Natural killer cell (primary cell): ENCODE measurements at regions of chr13 and their contacts with region 1.

Region 1: DNA sequence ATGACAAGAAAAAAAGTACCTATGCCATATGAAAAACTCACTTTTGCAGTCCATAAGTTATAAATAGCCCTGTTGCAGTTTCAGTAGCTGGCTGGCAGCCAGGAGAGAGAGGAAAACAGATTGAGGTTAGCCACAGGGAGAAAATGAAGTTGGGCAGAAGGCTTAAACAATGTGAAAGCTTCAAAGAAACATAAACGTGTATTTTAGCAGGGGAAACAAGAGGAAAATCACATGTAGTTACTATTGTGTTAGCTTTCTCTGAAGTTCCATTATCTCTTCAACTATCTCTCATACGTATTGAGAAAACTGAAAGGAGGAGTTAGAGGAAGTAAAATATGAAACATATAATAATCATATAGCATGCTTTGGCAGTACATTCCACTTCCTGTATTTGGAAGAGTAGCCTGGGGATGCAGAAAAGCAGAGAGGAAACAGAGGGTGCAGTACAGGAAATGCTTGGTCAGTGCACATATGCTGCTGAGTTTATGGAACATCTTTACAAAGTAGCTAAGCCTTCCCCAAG is 1551.1 kb downstream of the EFNB2 start:
- DNase-seq: peak in 1 of 2 donors; percentile 60
- ATAC-seq: peak; percentile 55 to 79 (median 63)
- H3K4me3 ChIP-seq: no peak overlapping the region
- H3K4me3 Mint-ChIP-seq: peak overlapping the region; percentile 68
- H3K27ac ChIP-seq: peak overlapping the region; percentile 55
- H3K27ac Mint-ChIP-seq: peak overlapping the region; percentile 80 to 89
- H3K4me1 ChIP-seq: no peaks in the 10 kb centered on the region
- H3K4me1 Mint-ChIP-seq: peaks cover 21 to 28% of the 10 kb centered on the region in 2 donors
- H3K27me3 ChIP-seq: no peaks in the 10 kb centered on the region
- H3K27me3 Mint-ChIP-seq: no peaks in the 10 kb centered on the region
- CTCF ChIP-seq: no peak

Region 2: DNA sequence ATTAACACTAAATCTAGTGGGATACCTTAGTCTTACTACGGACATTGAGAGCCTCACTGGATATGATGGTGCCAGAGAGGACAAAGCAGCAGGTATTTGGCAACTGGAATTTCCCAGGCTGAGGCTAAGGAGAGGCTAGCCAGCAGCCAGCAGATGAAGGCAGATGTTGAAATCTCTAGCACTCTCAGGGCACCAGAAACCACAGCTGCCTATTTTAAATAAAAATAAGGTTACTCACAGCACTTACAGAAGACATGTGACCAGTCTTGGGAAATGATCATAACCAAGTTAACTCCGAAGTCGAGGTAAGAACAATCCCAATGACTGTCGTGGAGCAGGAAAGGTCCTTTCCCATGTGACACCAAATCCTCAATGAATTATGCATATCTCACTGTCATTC is 174.9 kb before region 1 on chr13:
- intact Hi-C with region 1: loop called (anchors 10 kb)
- DNase-seq: no peak
- ATAC-seq: no peak
- H3K4me3 ChIP-seq: no peak overlapping the region
- H3K4me3 Mint-ChIP-seq: no peak overlapping the region
- H3K27ac ChIP-seq: no peak overlapping the region
- H3K27ac Mint-ChIP-seq: no peak overlapping the region
- H3K4me1 ChIP-seq: peaks cover 3% of the 10 kb centered on the region
- H3K4me1 Mint-ChIP-seq: peaks cover 12 to 13% of the 10 kb centered on the region in 2 donors
- H3K27me3 ChIP-seq: no peaks in the 10 kb centered on the region
- H3K27me3 Mint-ChIP-seq: peaks cover 0 to 3% of the 10 kb centered on the region in 2 donors
- CTCF ChIP-seq: no peak

Region 3: DNA sequence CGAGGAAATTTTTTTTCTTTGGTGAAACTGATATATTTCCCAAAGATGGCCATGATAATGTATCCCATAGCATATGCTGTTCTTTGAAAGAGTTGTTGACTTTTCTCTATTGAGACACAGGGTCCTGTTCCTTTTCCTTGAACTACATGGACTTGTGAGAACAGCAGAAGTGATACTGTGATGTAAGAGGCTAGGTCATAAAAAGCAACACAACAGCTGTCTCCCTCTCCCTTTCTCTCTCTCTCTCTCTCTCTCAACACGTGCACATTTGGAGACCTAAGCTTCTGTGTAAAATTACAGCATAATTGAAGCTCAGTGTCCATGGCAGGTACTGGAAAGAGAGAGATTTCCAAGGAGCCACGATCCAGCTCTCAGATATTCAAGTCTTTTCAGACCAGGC is 161.3 kb before region 1 on chr13:
- intact Hi-C with region 1: no loop called
- DNase-seq: no peak
- ATAC-seq: no peak
- H3K4me3 ChIP-seq: no peak overlapping the region
- H3K4me3 Mint-ChIP-seq: no peak overlapping the region
- H3K27ac ChIP-seq: no peak overlapping the region
- H3K27ac Mint-ChIP-seq: no peak overlapping the region
- H3K4me1 ChIP-seq: no peaks in the 10 kb centered on the region
- H3K4me1 Mint-ChIP-seq: no peaks in the 10 kb centered on the region
- H3K27me3 ChIP-seq: no peaks in the 10 kb centered on the region
- H3K27me3 Mint-ChIP-seq: no peaks in the 10 kb centered on the region
- CTCF ChIP-seq: no peak